PC-9 (cell line): ENCODE measurements at regions of chr5 and their contacts with region 1.

Region 1: GRCh38 chr5:137310051-137310730 is 188.9 kb downstream of the SPOCK1 start:
- DNase-seq: peak; percentile 29 to 92
- H3K4me3 ChIP-seq: no peak overlapping the region
- H3K27ac ChIP-seq: peak overlapping the region; percentile 68
- H3K4me1 ChIP-seq: peaks cover 26% of the 10 kb centered on the region
- H3K27me3 ChIP-seq: no peaks in the 10 kb centered on the region
- CTCF ChIP-seq: no peak

Region 2: DNA sequence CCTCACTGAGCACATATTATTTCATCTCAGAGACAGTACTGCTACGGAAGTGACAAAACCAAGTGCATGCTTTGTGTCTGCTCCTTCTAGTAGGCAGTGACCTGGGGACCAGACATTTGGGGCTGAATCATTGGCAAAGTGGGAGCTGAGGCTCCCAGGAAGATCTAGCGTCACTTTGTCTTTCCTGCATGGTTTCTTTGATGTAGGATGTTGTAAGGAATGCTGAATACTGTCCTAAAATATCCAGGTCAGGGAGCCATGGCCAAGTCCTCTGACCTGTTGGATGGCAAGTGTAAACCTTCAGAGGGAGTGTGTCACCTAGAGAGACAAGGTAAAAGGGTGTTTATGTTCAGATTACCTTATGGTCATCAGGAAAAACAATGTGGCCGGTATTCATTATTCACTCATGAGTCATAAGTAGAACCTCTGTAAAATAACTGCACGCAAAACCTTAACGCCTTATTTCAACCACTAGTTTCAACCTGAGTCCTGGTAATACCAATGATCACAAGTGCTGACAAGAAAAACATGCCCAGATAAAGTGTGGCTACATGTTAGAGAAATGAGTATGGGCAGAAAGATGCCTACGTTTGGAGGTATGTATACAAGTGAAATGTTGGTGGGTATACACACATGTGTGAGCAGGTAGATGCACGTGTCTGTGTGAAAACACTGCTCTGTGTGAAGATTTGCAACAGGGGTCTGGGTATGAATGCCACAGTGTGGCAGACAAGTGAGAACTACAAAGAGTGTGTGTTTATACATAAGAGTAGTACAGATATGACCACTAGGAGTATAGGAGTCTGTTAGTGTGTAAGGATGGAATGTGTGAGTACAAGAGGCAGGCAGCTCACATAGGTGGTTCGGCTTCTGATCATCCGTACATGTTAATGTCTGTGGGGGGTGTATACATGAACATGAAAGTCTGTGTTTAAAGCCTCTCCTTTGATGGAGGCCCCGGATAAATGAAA is 74.9 kb before region 1 on chr5:
- CTCF ChIA-PET with region 1: no interaction called
- POLR2A ChIA-PET with region 1: no interaction called
- intact Hi-C with region 1: loop called (anchors 2 kb)
- DNase-seq: peak; percentile 58 to 98
- H3K4me3 ChIP-seq: 0 out of 2 replicates have a peak overlapping the region, but pooled peaks have one; percentile 12
- H3K27ac ChIP-seq: peak overlapping the region; percentile 81
- H3K4me1 ChIP-seq: peaks cover 57% of the 10 kb centered on the region
- H3K27me3 ChIP-seq: no peaks in the 10 kb centered on the region
- CTCF ChIP-seq: no peak

Region 3: DNA sequence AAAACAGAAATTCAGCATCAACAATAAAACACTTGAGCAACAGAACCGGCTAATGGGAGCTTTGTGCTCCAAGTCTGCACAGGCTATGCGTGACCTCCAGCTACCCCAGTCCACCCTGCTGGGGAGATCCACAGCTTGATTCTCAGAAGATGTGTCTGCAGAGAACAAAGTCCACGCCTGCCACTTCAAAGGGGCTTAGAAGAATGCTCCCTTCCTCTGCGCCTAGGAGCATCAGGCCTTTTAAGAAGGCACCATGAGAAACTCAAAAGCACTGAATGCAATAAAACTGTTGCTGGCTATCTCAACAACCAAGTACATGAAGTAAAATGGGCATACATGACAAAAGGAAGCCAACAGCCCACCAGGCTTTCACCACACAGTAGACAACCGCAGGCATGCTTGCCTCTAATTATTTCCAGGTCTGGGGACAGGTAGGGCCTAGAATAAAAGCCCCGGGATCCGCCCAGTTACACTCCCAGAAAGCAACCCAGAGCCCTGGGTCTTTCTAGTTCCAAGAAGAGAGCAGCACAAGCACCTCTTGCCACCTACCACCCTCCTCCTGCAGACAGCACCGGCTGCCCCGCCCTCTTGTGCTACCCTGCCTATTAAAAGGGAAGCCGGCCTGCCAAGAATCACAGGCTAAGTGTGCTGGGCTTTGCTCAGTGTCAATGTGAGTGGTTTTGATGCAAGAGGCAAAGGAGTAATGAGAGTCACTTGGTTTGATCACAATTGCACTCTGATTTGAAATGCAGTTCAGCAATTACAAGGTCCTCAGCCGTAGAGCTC is 65.7 kb after region 1 on chr5:
- CTCF ChIA-PET with region 1: no interaction called
- POLR2A ChIA-PET with region 1: interaction called, 11 read pairs
- intact Hi-C with region 1: no loop called
- DNase-seq: no peak
- H3K4me3 ChIP-seq: no peak overlapping the region
- H3K27ac ChIP-seq: no peak overlapping the region
- H3K4me1 ChIP-seq: peaks cover 14% of the 10 kb centered on the region
- H3K27me3 ChIP-seq: no peaks in the 10 kb centered on the region
- CTCF ChIP-seq: no peak